ENCODE measurements at regions of chr11 and their contacts with region 1.

Region 1: DNA sequence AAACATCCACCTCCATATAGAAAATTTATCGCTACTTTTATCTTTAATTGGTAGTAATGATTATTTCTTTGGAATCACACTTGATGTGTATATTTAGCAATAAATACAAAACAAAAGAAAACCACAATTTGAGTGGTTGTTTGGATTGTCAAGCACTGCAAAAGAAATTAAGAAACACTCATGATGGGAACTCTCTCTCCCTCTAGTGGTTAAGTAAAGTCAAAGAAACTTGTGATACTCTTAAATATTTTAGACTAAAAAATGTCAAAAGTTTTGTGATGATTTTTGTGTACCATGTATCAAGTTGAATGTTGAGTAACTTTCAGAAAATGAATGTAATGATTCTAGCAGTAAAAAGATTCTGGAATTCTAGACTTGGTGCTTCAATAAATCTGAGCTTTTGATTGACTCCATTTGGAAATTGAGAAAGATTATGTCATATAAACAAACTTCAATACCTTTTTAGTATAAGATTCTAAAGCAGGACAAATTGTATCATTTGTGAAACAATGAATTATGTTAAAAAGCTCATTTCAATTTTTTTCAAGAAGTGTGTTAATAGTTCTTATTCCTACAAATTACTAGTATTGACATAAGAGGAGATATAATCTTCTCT is 20.8 kb downstream of the MUC15 start:
- DNase-seq: peak; percentile 75
- H3K4me3 ChIP-seq: no peak overlapping the region
- H3K27ac ChIP-seq: no peak overlapping the region
- H3K4me1 ChIP-seq: no peaks in the 10 kb centered on the region
- H3K27me3 ChIP-seq: peaks cover 97% of the 10 kb centered on the region
- CTCF ChIP-seq: peak; percentile 97

Region 2: DNA sequence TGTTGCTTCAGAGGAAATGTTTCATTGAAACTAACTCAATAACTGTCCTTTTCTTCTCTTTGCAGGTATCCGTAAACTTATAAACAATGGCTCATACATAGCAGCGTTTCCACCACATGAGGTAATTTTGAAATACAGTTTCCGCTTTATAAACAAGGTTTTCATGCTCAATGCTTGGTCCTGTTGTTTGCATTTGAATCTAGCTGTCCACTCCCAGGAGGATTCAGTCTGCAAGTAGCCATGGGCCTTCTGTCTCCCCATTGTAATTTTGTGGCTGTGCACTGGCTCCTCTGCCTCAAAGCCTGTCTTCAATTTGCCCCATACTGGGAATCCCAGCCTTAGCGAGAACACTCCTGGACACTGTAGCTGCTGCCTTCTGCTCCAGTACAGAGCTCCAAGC is 14.0 kb before region 1 on chr11:
- CTCF ChIA-PET with region 1: interaction called, 3 read pairs
- POLR2A ChIA-PET with region 1: no interaction called
- intact Hi-C with region 1: loop called (anchors 1 kb)
- DNase-seq: peak; percentile 11
- H3K4me3 ChIP-seq: no peak overlapping the region
- H3K27ac ChIP-seq: no peak overlapping the region
- H3K4me1 ChIP-seq: no peaks in the 10 kb centered on the region
- H3K27me3 ChIP-seq: peaks cover 19% of the 10 kb centered on the region
- CTCF ChIP-seq: no peak

Region 3: GRCh38 chr11:26649884-26650283 is 98.6 kb after region 1 on chr11:
- CTCF ChIA-PET with region 1: no interaction called
- POLR2A ChIA-PET with region 1: no interaction called
- intact Hi-C with region 1: loop called (anchors 1 kb)
- DNase-seq: peak; percentile 97
- H3K4me3 ChIP-seq: no peak overlapping the region
- H3K27ac ChIP-seq: no peak overlapping the region
- H3K4me1 ChIP-seq: no peaks in the 10 kb centered on the region
- H3K27me3 ChIP-seq: peaks cover 86% of the 10 kb centered on the region
- CTCF ChIP-seq: peak; percentile 100